IMR-90 (cell line): ENCODE measurements at regions of chr2 and their contacts with region 1.

Region 1: DNA sequence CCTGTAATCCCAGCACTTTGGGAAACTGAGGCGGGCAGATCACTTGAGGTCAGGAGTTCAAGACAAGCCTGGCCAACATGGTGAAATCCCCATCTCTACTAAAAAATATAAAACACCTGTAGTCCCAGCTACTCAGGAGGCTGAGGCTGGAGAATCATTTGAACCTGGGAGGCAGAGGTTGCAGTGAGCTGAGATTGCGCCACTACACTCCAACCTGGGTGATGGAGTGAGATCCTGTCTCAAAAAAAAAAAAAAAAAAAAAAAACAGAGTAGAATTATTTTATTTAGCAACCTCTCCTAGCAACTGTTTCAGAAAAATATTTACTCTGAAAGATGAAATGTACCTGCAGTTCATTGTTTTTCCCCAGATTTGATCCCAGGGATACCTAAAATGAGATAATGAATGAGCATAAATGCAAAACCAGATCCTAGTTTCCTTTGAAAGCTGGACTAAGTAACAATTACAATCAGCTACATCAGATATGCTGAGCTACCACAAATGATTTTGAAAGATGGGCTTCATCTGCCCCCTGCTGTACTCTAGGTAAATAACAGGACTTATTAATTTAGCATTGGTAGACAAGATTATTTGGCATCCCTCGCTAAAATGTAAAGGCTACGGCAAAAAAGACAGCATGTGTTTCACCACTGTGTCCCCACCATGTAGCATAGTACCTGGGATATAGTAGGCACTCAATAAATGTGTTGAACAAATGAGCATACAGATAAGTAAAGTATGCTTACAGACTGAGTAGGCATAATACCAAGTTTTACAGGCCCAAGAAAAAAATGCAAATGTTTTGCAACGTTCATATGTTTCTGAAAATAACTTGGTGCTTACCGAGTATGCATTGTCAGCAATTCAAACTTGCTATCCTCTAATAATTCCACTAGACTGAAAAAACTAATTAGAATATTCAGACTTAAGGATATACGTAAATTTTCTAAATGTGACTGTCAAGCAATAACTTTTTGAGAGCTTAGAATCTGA is 102.5 kb downstream of the ATL2 start:
- DNase-seq: peak; percentile 87
- ATAC-seq: peak; percentile 94
- H3K4me3 ChIP-seq: no peak overlapping the region
- H3K27ac ChIP-seq: no peak overlapping the region
- H3K4me1 ChIP-seq: peaks cover 2% of the 10 kb centered on the region; the same call in 1 of the 2 replicates
- H3K27me3 ChIP-seq: peaks cover 10% of the 10 kb centered on the region; the same call in 1 of the 2 replicates
- CTCF ChIP-seq: peak; percentile 82
- POLR2A ChIP-seq: no peak
- RAD21 ChIP-seq: peak; percentile 88

Region 2: GRCh38 chr2:37389989-37390765 is 884.4 kb before region 1 on chr2:
- CTCF ChIA-PET with region 1: no interaction called
- POLR2A ChIA-PET with region 1: no interaction called
- dilution Hi-C with region 1: no loop called
- in situ Hi-C with region 1: loop called (anchors 10 kb)
- intact Hi-C with region 1: loop called (anchors 5 kb)
- DNase-seq: peak; percentile 96
- ATAC-seq: peak; percentile 60
- H3K4me3 ChIP-seq: no peak overlapping the region
- H3K27ac ChIP-seq: peak overlapping the region; percentile 26
- H3K4me1 ChIP-seq: peaks cover 27% of the 10 kb centered on the region
- H3K27me3 ChIP-seq: no peaks in the 10 kb centered on the region
- CTCF ChIP-seq: no peak
- POLR2A ChIP-seq: 0 out of 2 replicates have a peak, but pooled peaks have one; percentile 25
- RAD21 ChIP-seq: no peak

Region 3: GRCh38 chr2:37672104-37672869 is 602.3 kb before region 1 on chr2:
- CTCF ChIA-PET with region 1: no interaction called
- POLR2A ChIA-PET with region 1: no interaction called
- dilution Hi-C with region 1: no loop called
- in situ Hi-C with region 1: no loop called
- intact Hi-C with region 1: loop called (anchors 10 kb)
- DNase-seq: peak; percentile 88
- ATAC-seq: peak; percentile 53
- H3K4me3 ChIP-seq: peak overlapping the region; percentile 99
- H3K27ac ChIP-seq: peak overlapping the region; percentile 87
- H3K4me1 ChIP-seq: peaks cover 7% of the 10 kb centered on the region
- H3K27me3 ChIP-seq: no peaks in the 10 kb centered on the region
- CTCF ChIP-seq: no peak
- POLR2A ChIP-seq: no peak
- RAD21 ChIP-seq: no peak; the same call in 1 of the 2 replicates

Region 4: GRCh38 chr2:37925063-37925897 is 349.3 kb before region 1 on chr2 and contains the start of gene RMDN2:
- CTCF ChIA-PET with region 1: no interaction called
- POLR2A ChIA-PET with region 1: no interaction called
- dilution Hi-C with region 1: no loop called
- in situ Hi-C with region 1: no loop called
- intact Hi-C with region 1: loop called (anchors 1 kb)
- DNase-seq: peak; percentile 90
- ATAC-seq: peak; percentile 91
- H3K4me3 ChIP-seq: peak within 1 kb of the TSS; percentile 83
- H3K27ac ChIP-seq: peak within 1 kb of the TSS; percentile 91
- H3K4me1 ChIP-seq: peaks cover 2% of the 10 kb centered on the region; the same call in 1 of the 2 replicates
- H3K27me3 ChIP-seq: no peaks in the 10 kb centered on the region
- CTCF ChIP-seq: 0 out of 2 replicates have a peak, but pooled peaks have one; percentile 0
- POLR2A ChIP-seq: no peak; the same call in 1 of the 2 replicates
- RAD21 ChIP-seq: no peak
- total RNA-seq, gene RMDN2: 2.3 and 5.8 TPM in 2 replicates

Region 5: DNA sequence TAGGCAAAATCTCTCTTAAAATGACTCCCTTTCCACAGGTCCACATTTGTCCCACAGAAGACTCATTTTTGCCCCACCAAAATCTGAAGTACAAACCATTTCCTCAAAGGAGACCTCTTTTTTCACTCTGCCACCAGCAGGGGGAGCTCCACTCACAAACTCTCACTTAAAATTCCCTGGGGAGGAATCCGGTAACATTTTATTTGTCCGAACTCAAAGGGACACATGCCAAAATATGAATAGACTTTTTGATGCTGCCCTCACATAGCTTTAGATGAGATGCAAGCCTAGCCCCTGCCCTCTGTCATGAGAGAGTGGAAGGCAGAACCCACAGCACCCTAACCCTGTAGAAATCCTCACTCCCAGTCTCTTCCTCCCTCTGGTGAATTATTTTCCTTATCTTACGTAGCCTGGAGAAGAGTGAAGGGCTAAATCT is 292.4 kb before region 1 on chr2:
- CTCF ChIA-PET with region 1: interaction called, 5 read pairs
- POLR2A ChIA-PET with region 1: no interaction called
- dilution Hi-C with region 1: no loop called
- in situ Hi-C with region 1: no loop called
- intact Hi-C with region 1: loop called (anchors 1 kb)
- DNase-seq: peak; percentile 58
- ATAC-seq: peak; percentile 29; the same call in 1 of the 2 replicates
- H3K4me3 ChIP-seq: no peak overlapping the region
- H3K27ac ChIP-seq: no peak overlapping the region
- H3K4me1 ChIP-seq: peaks cover 3% of the 10 kb centered on the region; the same call in 1 of the 2 replicates
- H3K27me3 ChIP-seq: no peaks in the 10 kb centered on the region
- CTCF ChIP-seq: peak; percentile 72
- POLR2A ChIP-seq: no peak
- RAD21 ChIP-seq: peak; percentile 65

Region 6: DNA sequence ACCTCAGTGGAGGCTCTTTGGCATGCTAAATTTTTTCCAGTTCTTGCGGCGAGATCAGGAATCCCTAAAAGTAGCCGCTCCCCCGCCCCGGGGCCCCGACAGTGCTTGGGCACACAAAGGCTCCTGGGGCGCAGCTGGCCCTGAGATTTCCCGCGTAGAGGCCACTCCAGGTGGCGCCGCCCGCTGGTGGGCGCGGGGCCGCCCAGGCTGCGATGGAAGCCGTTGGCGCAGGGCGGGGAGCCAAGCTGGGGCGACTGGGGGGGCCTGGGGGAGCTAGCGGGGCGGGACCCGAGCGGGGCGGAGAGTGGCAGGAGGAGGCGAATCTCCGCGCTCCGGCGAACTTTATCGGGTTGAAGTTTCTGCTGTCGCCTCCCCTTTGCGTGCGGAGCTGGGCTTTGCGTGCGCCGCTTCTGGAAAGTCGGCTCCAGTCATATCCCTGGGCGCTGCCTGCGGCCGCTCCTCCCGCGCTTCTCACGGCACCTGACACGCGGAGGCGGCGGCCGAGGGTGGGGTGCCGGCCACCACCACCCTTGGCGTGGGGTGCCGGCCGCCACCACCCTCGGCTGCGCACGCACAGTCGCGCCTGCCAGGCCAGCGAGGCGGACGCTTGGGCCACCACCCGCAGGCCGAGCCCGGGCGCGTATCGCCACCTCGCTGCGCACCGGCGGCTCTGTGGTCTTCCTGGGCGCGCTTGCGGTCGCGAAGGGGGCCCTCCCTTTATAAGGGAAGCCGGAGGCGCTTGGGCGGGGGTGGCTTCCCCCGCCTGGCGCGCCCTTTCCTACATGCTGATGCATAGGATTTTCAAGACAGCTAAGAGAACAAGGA is 197.8 kb before region 1 on chr2:
- CTCF ChIA-PET with region 1: interaction called, 4 read pairs
- POLR2A ChIA-PET with region 1: no interaction called
- dilution Hi-C with region 1: no loop called
- in situ Hi-C with region 1: loop called (anchors 10 kb)
- intact Hi-C with region 1: loop called (anchors 1 kb)
- DNase-seq: peak; percentile 90
- ATAC-seq: peak; percentile 83
- H3K4me3 ChIP-seq: peak overlapping the region; percentile 35
- H3K27ac ChIP-seq: peak overlapping the region; percentile 57
- H3K4me1 ChIP-seq: no peaks in the 10 kb centered on the region
- H3K27me3 ChIP-seq: peaks cover 30% of the 10 kb centered on the region
- CTCF ChIP-seq: 0 out of 2 replicates have a peak, but pooled peaks have one; percentile 16
- POLR2A ChIP-seq: peak; percentile 66
- RAD21 ChIP-seq: no peak; the same call in 1 of the 2 replicates

Region 7: GRCh38 chr2:38115216-38116032 is 159.2 kb before region 1 on chr2:
- CTCF ChIA-PET with region 1: no interaction called
- POLR2A ChIA-PET with region 1: no interaction called
- dilution Hi-C with region 1: no loop called
- in situ Hi-C with region 1: no loop called
- intact Hi-C with region 1: loop called (anchors 1 kb)
- DNase-seq: peak; percentile 51
- ATAC-seq: peak; percentile 91
- H3K4me3 ChIP-seq: no peak overlapping the region
- H3K27ac ChIP-seq: no peak overlapping the region
- H3K4me1 ChIP-seq: peaks cover 4% of the 10 kb centered on the region; the same call in 1 of the 2 replicates
- H3K27me3 ChIP-seq: peaks cover 11% of the 10 kb centered on the region; the same call in 1 of the 2 replicates
- CTCF ChIP-seq: peak; percentile 80
- POLR2A ChIP-seq: no peak
- RAD21 ChIP-seq: peak; percentile 83

Region 8: GRCh38 chr2:38406597-38407110 is 132.1 kb after region 1 on chr2:
- CTCF ChIA-PET with region 1: no interaction called
- POLR2A ChIA-PET with region 1: no interaction called
- dilution Hi-C with region 1: no loop called
- in situ Hi-C with region 1: no loop called
- intact Hi-C with region 1: no loop called
- DNase-seq: no peak
- ATAC-seq: no peak
- H3K4me3 ChIP-seq: no peak overlapping the region
- H3K27ac ChIP-seq: no peak overlapping the region
- H3K4me1 ChIP-seq: no peaks in the 10 kb centered on the region
- H3K27me3 ChIP-seq: peaks cover 16% of the 10 kb centered on the region
- CTCF ChIP-seq: no peak
- POLR2A ChIP-seq: no peak
- RAD21 ChIP-seq: no peak

Region 9: GRCh38 chr2:38444247-38444646 is 169.7 kb after region 1 on chr2:
- CTCF ChIA-PET with region 1: no interaction called
- POLR2A ChIA-PET with region 1: no interaction called
- dilution Hi-C with region 1: no loop called
- in situ Hi-C with region 1: no loop called
- intact Hi-C with region 1: no loop called
- DNase-seq: peak; percentile 43
- ATAC-seq: peak; percentile 49
- H3K4me3 ChIP-seq: no peak overlapping the region
- H3K27ac ChIP-seq: no peak overlapping the region
- H3K4me1 ChIP-seq: 0 out of 2 replicates have a peak, but pooled peaks cover 4% of the 10 kb centered on the region
- H3K27me3 ChIP-seq: peaks cover 65% of the 10 kb centered on the region
- CTCF ChIP-seq: no peak
- POLR2A ChIP-seq: no peak
- RAD21 ChIP-seq: no peak